ENCODE measurements at regions of chr11 and their contacts with region 1.

Region 1: DNA sequence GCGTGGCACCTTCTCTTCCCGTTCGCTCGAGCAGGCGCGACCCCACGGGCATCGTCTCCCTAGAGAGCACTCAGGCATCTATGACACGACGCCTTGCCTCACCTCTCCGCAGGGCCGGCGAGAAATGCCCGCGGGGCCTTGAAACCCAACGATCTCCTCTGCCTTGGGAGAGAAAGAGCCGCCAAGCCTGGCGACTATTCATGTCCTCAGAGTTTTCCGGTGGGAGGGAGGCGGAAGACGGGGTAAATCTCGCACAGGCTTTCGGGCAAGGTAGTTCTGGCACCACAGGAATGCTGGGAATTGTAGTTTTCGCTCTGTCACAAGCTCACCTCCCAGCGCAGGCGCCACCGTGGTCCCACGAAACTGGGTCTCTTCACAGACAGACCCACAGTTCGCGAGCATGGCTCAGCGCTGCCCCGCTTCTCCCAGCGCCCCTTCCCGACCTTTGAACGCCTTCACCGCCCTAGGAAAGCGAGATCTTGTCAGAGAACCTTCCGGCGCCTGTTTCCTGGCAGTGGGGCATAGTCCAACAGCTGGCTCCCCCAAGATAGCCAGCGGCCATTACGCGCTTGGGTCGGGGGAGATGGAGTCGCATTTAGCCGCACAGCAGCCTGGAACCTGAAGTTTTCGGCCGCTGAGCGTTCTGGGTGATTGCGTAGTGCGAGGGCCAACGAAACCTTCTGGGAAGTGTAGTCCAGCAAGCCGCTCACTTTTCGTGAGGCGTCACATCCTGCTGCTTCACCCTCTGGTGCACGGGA is at the start of gene CCDC90B:
- DNase-seq: peak; percentile 96 to 97
- H3K4me3 ChIP-seq: peak within 1 kb of the TSS; percentile 9 to 85 (median 83)
- H3K27ac ChIP-seq: peak within 1 kb of the TSS; percentile 98 to 99 (median 99)
- H3K4me1 ChIP-seq: peaks cover 17 to 25% of the 10 kb centered on the region in 2 donors
- H3K27me3 ChIP-seq: no peaks in the 10 kb centered on the region
- CTCF ChIP-seq: peak in 2 of 6 experiments; percentile 11 to 36
- POLR2A ChIP-seq: peak; percentile 53 to 92
- total RNA-seq, gene CCDC90B: 47.4 to 54.8 (median 51.5) TPM

Region 2: GRCh38 chr11:83174008-83174407 is 111.9 kb before region 1 on chr11:
- intact Hi-C with region 1: loop called (anchors 10 kb)
- DNase-seq: no peak
- H3K4me3 ChIP-seq: no peak overlapping the region
- H3K27ac ChIP-seq: peak overlapping the region in 1 of 3 donors; percentile 1
- H3K4me1 ChIP-seq: peaks cover 36 to 53% of the 10 kb centered on the region in 2 donors
- H3K27me3 ChIP-seq: no peaks in the 10 kb centered on the region
- CTCF ChIP-seq: no peak
- POLR2A ChIP-seq: no peak

Region 3: GRCh38 chr11:83349296-83349695 is 63.3 kb after region 1 on chr11:
- intact Hi-C with region 1: no loop called
- DNase-seq: no peak
- H3K4me3 ChIP-seq: no peak overlapping the region
- H3K27ac ChIP-seq: no peak overlapping the region
- H3K4me1 ChIP-seq: peaks cover 3 to 13% of the 10 kb centered on the region in 2 donors
- H3K27me3 ChIP-seq: no peaks in the 10 kb centered on the region
- CTCF ChIP-seq: no peak
- POLR2A ChIP-seq: no peak